Pancreas (tissue), 10 donors: ENCODE measurements at regions of chr5 and their contacts with region 1.

Region 1: GRCh38 chr5:149128023-149128875 is 13.0 kb upstream of the ABLIM3 start:
- DNase-seq: no peak
- ATAC-seq: peak in 3 of 4 donors; percentile 28 to 54 (median 51)
- H3K4me3 ChIP-seq: no peak overlapping the region
- H3K27ac ChIP-seq: no peak overlapping the region
- H3K4me1 ChIP-seq: peaks cover 0 to 5% (median 4%) of the 10 kb centered on the region in 3 donors
- H3K27me3 ChIP-seq: no peaks in the 10 kb centered on the region
- CTCF ChIP-seq: peak in 3 of 4 donors; percentile 15 to 32 (median 22)

Region 2: GRCh38 chr5:149268928-149269557 is 140.8 kb after region 1 on chr5:
- intact Hi-C with region 1: loop called in 1 of 3 experiments (anchors 10 kb)
- DNase-seq: no peak
- ATAC-seq: peak in 1 of 4 donors; percentile 29
- H3K4me3 ChIP-seq: no peak overlapping the region
- H3K27ac ChIP-seq: no peak overlapping the region
- H3K4me1 ChIP-seq: peaks cover 0 to 3% (median 0%) of the 10 kb centered on the region in 3 donors
- H3K27me3 ChIP-seq: no peaks in the 10 kb centered on the region
- CTCF ChIP-seq: peak; percentile 11 to 63 (median 55)

Region 3: GRCh38 chr5:149371296-149371962 is 243.2 kb after region 1 on chr5:
- intact Hi-C with region 1: no loop called
- DNase-seq: peak in 5 of 6 donors; percentile 58 to 78 (median 67)
- ATAC-seq: peak; percentile 88 to 96 (median 92)
- H3K4me3 ChIP-seq: no peak overlapping the region
- H3K27ac ChIP-seq: no peak overlapping the region
- H3K4me1 ChIP-seq: peaks cover 0 to 3% (median 0%) of the 10 kb centered on the region in 3 donors
- H3K27me3 ChIP-seq: no peaks in the 10 kb centered on the region
- CTCF ChIP-seq: peak; percentile 61 to 70 (median 68)